ENCODE measurements at regions of chr5 and their contacts with region 1.

Region 1: GRCh38 chr5:178075840-178076548 is 37.3 kb upstream of the N4BP3 start:
- DNase-seq: peak; percentile 90
- ATAC-seq: peak; percentile 91
- H3K4me3 Mint-ChIP-seq: peak overlapping the region; percentile 26
- H3K27ac Mint-ChIP-seq: no peak overlapping the region
- H3K4me1 Mint-ChIP-seq: peaks cover 3% of the 10 kb centered on the region
- H3K27me3 Mint-ChIP-seq: peaks cover 3% of the 10 kb centered on the region

Region 2: GRCh38 chr5:177554474-177555111 is 521.4 kb before region 1 on chr5 and contains the start of gene FAM193B:
- CTCF ChIA-PET with region 1: no interaction called
- POLR2A ChIA-PET with region 1: no interaction called
- intact Hi-C with region 1: no loop called
- DNase-seq: peak; percentile 98
- ATAC-seq: peak; percentile 99
- H3K4me3 Mint-ChIP-seq: peak within 1 kb of the TSS; percentile 80
- H3K27ac Mint-ChIP-seq: peak within 1 kb of the TSS; percentile 66
- H3K4me1 Mint-ChIP-seq: peaks cover 25% of the 10 kb centered on the region
- H3K27me3 Mint-ChIP-seq: no peaks in the 10 kb centered on the region
- total RNA-seq, gene FAM193B: 63.6 to 77.7 TPM

Region 3: GRCh38 chr5:178090858-178091540 is 15.0 kb after region 1 on chr5:
- CTCF ChIA-PET with region 1: interaction called, 59 read pairs
- POLR2A ChIA-PET with region 1: no interaction called
- intact Hi-C with region 1: no loop called
- DNase-seq: peak; percentile 46
- ATAC-seq: peak; percentile 70
- H3K4me3 Mint-ChIP-seq: no peak overlapping the region
- H3K27ac Mint-ChIP-seq: no peak overlapping the region
- H3K4me1 Mint-ChIP-seq: peaks cover 22% of the 10 kb centered on the region
- H3K27me3 Mint-ChIP-seq: peaks cover 2% of the 10 kb centered on the region

Region 4: DNA sequence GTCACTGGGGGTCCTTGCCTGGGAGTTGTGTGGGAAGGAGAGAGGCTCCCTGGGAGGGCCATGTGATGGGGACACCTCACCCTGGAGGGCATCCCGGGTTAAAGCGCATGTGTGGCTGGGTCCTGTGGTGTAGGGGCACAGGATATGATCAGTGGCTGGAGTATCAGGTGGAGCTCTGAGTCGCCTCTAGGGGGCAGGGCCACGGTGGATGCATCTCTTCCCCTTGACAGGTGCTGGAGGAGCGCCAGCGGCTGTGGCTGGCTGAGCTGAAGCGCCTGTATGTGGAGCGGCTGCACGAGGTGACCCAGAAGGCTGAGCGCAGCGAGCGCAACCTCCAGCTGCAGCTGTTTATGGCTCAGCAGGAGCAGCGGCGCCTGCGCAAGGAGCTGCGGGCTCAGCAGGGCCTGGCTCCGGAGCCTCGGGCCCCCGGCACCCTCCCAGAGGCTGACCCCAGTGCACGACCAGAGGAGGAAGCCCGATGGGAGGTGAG is 44.9 kb after region 1 on chr5:
- CTCF ChIA-PET with region 1: interaction called, 26 read pairs
- POLR2A ChIA-PET with region 1: no interaction called
- intact Hi-C with region 1: loop called in 1 of 2 experiments (anchors 2 kb)
- DNase-seq: peak; percentile 94
- ATAC-seq: peak; percentile 94
- H3K4me3 Mint-ChIP-seq: no peak overlapping the region
- H3K27ac Mint-ChIP-seq: no peak overlapping the region
- H3K4me1 Mint-ChIP-seq: peaks cover 22% of the 10 kb centered on the region
- H3K27me3 Mint-ChIP-seq: no peaks in the 10 kb centered on the region

Region 5: GRCh38 chr5:178136990-178137389 is 61.0 kb after region 1 on chr5:
- CTCF ChIA-PET with region 1: interaction called, 11 read pairs
- POLR2A ChIA-PET with region 1: interaction called, 6 read pairs
- intact Hi-C with region 1: loop called in 1 of 2 experiments (anchors 5 kb)
- DNase-seq: no peak
- ATAC-seq: no peak
- H3K4me3 Mint-ChIP-seq: no peak overlapping the region
- H3K27ac Mint-ChIP-seq: no peak overlapping the region
- H3K4me1 Mint-ChIP-seq: peaks cover 17% of the 10 kb centered on the region
- H3K27me3 Mint-ChIP-seq: no peaks in the 10 kb centered on the region

Region 6: GRCh38 chr5:178163772-178164735 is 88.1 kb after region 1 on chr5:
- CTCF ChIA-PET with region 1: interaction called, 137 read pairs
- POLR2A ChIA-PET with region 1: no interaction called
- intact Hi-C with region 1: loop called (anchors 1 kb)
- DNase-seq: peak; percentile 95
- ATAC-seq: peak; percentile 99
- H3K4me3 Mint-ChIP-seq: peak overlapping the region; percentile 20
- H3K27ac Mint-ChIP-seq: no peak overlapping the region
- H3K4me1 Mint-ChIP-seq: peaks cover 3% of the 10 kb centered on the region
- H3K27me3 Mint-ChIP-seq: peaks cover 23% of the 10 kb centered on the region

Measured in activated CD4-positive, alpha-beta T cell treated with anti-CD3 and anti-CD28 coated beads for 36 hours (primary cell).